CD4-positive, alpha-beta T cell (primary cell): ENCODE measurements at regions of chr6 and their contacts with region 1.

Region 1: DNA sequence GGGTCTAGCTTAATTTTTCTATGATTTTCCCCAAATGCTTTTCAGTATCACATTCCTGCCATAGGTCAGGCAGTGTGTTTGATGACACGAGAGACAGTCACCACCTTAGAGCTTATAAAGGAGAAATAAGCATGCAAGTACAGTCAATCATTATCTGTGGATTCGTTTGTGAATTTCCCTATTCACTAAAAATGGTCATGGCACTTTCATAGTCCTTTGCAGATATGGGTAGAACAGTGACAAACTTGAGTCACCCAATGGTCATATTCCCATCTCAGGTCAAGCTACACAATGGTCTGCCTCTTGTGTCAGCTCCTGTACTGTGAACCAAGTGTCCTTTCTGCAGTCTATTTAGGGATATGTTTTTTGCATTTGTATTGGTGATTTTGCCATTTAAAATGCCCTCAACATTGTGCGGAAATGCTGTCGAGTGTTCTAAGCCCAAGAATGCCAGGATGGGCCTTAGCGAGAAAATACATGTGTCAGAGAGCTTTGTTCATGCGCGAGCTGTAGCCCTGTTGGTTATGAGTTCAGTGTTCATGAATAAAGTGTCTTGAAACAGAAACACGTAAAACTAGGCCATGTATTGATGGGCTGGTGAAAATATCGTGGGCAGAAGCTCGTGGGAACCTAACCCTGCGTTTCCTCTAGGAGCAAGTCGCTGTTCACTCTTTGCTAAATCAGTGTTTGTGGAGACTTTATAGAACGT is 19.8 kb downstream of the SUMO4 start:
- DNase-seq: no peak
- ATAC-seq: no peak
- H3K4me3 ChIP-seq: no peak overlapping the region
- H3K4me3 Mint-ChIP-seq: no peak overlapping the region
- H3K27ac ChIP-seq: no peak overlapping the region
- H3K27ac Mint-ChIP-seq: no peak overlapping the region
- H3K4me1 ChIP-seq: no peaks in the 10 kb centered on the region
- H3K4me1 Mint-ChIP-seq: peaks cover 6% of the 10 kb centered on the region
- H3K27me3 ChIP-seq: no peaks in the 10 kb centered on the region
- H3K27me3 Mint-ChIP-seq: no peaks in the 10 kb centered on the region
- CTCF ChIP-seq: no peak

Region 2: DNA sequence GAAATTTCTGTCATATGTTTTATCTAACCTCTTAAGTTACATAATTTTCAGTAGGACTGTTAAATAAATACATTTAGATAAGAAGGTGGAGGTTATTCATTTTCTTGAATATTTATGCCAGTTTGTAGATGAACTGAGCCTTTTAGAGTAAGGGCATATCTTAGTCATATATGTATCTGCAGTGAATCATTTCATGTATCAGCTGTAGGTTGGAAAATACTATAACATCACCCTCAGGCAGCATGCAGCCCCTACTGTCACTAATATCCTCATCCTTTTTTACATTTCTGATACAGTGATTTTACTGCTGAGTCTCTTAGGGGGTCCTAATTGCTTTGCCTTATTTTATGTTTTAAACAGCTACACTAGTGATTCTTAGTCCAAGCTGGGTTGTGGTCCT is 39.3 kb before region 1 on chr6:
- CTCF ChIA-PET with region 1: no interaction called
- POLR2A ChIA-PET with region 1: no interaction called
- intact Hi-C with region 1: loop called in 1 of 2 experiments (anchors 5 kb)
- DNase-seq: no peak
- ATAC-seq: no peak
- H3K4me3 ChIP-seq: no peak overlapping the region
- H3K4me3 Mint-ChIP-seq: no peak overlapping the region
- H3K27ac ChIP-seq: no peak overlapping the region
- H3K27ac Mint-ChIP-seq: no peak overlapping the region
- H3K4me1 ChIP-seq: peaks cover 5% of the 10 kb centered on the region
- H3K4me1 Mint-ChIP-seq: peaks cover 50% of the 10 kb centered on the region
- H3K27me3 ChIP-seq: no peaks in the 10 kb centered on the region
- H3K27me3 Mint-ChIP-seq: no peaks in the 10 kb centered on the region
- CTCF ChIP-seq: no peak

Region 3: GRCh38 chr6:150068720-150069648 is 649.1 kb after region 1 on chr6 and contains the start of gene ULBP3:
- CTCF ChIA-PET with region 1: no interaction called
- POLR2A ChIA-PET with region 1: no interaction called
- intact Hi-C with region 1: no loop called
- DNase-seq: peak; percentile 29 to 82 (median 53)
- ATAC-seq: peak; percentile 72
- H3K4me3 ChIP-seq: peak within 1 kb of the TSS; percentile 72
- H3K4me3 Mint-ChIP-seq: peak within 1 kb of the TSS; percentile 94
- H3K27ac ChIP-seq: no peak within 1 kb of the TSS
- H3K27ac Mint-ChIP-seq: no peak within 1 kb of the TSS
- H3K4me1 ChIP-seq: peaks cover 30% of the 10 kb centered on the region
- H3K4me1 Mint-ChIP-seq: peaks cover 20% of the 10 kb centered on the region
- H3K27me3 ChIP-seq: no peaks in the 10 kb centered on the region
- H3K27me3 Mint-ChIP-seq: peaks cover 19% of the 10 kb centered on the region
- CTCF ChIP-seq: peak; percentile 17
- total RNA-seq, gene ULBP3: 0.44 TPM in 1 of 2 experiments, not detected in the other